Heart left ventricle (tissue), 16 donors: ENCODE measurements at regions of chr11 and their contacts with region 1.

Region 1: GRCh38 chr11:1515082-1516060 is 28.8 kb upstream of the MOB2 start:
- DNase-seq: peak; percentile 75 to 89 (median 80)
- ATAC-seq: peak; percentile 79 to 90 (median 88)
- H3K4me3 ChIP-seq: no peak overlapping the region
- H3K27ac ChIP-seq: peak overlapping the region in 1 of 12 donors; percentile 6
- H3K4me1 ChIP-seq: peaks cover 15 to 79% (median 55%) of the 10 kb centered on the region in 12 donors
- H3K27me3 ChIP-seq: no peaks in the 10 kb centered on the region
- CTCF ChIP-seq: peak; percentile 87 to 99 (median 96)
- POLR2A ChIP-seq: no peak

Region 2: DNA sequence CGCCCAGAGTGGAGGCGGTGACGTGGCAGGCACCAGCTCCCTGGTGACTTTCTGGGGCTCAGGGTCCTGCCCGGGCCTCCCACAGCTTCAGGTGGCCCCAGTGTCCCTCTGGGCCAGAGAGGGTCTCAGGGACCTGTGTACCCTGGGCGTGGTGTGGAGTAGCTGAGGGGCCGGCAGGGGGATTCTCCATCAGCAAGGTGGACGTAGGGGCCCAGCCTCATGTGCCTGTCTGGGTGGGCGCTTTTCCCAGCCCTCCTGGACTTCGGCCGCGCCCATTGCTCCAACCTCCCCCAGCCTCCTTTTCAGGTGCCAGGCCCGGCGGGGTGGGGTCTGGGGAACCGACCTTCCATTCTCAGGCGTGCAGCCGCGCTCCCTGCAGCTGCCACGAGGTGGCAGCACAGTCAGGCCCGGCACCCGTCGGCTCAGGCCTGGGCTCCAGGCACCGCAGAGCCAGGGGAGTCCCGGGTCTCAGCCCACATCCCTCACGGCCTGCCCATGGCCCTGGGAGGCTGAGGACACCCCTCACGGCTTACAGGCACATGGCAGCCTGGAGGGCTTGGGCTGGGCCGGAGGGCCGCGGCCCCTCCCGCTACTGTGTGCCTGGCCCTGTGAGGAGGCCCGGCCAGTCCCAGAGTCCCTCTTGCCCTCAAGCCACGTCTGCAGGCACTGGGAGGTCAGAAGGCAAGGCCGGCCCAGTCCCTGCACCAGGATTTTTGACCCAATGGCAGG is 312.4 kb before region 1 on chr11:
- intact Hi-C with region 1: loop called in 9 of 10 experiments (anchors 1 to 5 kb)
- DNase-seq: peak in 4 of 5 donors; percentile 19 to 81 (median 55)
- ATAC-seq: peak; percentile 28 to 84 (median 72)
- H3K4me3 ChIP-seq: no peak overlapping the region
- H3K27ac ChIP-seq: no peak overlapping the region
- H3K4me1 ChIP-seq: peaks cover 0 to 8% (median 0%) of the 10 kb centered on the region in 12 donors
- H3K27me3 ChIP-seq: peaks cover 0 to 35% (median 14%) of the 10 kb centered on the region in 9 donors
- CTCF ChIP-seq: peak; percentile 75 to 94 (median 91)
- POLR2A ChIP-seq: no peak

Region 3: GRCh38 chr11:1298695-1299492 is 216.5 kb before region 1 on chr11:
- intact Hi-C with region 1: loop called in 3 of 10 experiments (anchors 10 kb)
- DNase-seq: peak; percentile 49 to 86 (median 85)
- ATAC-seq: peak; percentile 57 to 89 (median 80)
- H3K4me3 ChIP-seq: no peak overlapping the region
- H3K27ac ChIP-seq: peak overlapping the region in 6 of 12 donors; percentile 17 to 63 (median 34)
- H3K4me1 ChIP-seq: peaks cover 0 to 50% (median 35%) of the 10 kb centered on the region in 12 donors
- H3K27me3 ChIP-seq: no peaks in the 10 kb centered on the region
- CTCF ChIP-seq: no peak
- POLR2A ChIP-seq: no peak

Region 4: DNA sequence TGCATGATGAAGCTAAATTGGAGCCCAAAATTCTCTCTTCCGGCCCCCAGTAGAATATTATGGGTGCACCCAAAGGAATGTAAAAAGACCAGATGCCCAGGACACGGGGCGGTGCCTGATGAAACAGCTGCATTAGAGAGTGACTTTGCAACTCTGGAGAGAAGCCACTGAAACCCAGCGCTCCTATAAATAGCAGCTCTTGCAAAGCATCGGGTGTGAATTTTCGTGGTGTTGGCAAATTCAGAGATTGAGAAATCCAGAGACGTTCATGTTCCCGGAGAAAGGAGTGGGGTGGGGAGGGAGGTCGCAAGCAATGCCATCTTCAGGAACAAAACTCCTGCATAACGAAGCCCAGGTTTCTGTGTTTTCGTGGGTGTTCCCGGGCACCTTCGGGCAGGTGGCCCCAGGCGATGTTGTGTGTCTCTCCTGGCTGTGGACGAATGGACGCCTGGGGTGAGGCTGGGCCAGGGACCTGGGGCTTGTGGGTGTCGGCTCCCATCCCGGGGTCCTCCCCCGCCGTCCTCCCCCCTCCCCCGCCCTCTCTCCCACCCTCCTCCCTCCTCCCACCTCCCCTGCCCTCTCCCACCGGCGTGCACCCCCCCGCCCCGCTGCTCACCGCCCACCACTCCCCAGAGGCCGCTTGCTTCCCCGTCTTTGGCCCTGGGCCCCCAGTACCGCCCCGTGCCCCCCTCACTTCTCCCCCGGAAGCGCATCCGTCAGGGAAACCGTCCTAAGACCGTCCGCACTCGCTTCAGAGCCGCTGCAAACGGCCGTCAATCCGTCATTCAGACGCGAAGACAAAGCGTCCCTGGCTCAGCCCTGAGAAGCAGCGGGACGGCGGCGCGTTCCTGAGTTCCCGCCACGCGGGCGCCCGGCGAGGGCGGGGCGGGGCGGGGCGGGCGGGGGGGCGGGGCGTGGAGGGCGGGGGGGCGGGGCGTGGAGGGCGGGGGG is 179.3 kb before region 1 on chr11:
- intact Hi-C with region 1: loop called in 1 of 10 experiments (anchors 5 kb)
- DNase-seq: peak; percentile 53 to 80 (median 68)
- ATAC-seq: peak; percentile 65 to 78 (median 75)
- H3K4me3 ChIP-seq: peak overlapping the region; percentile 24 to 59 (median 52)
- H3K27ac ChIP-seq: peak overlapping the region in 10 of 12 donors; percentile 18 to 80 (median 48)
- H3K4me1 ChIP-seq: peaks cover 4 to 25% (median 12%) of the 10 kb centered on the region in 12 donors
- H3K27me3 ChIP-seq: no peaks in the 10 kb centered on the region
- CTCF ChIP-seq: no peak
- POLR2A ChIP-seq: no peak

Region 5: DNA sequence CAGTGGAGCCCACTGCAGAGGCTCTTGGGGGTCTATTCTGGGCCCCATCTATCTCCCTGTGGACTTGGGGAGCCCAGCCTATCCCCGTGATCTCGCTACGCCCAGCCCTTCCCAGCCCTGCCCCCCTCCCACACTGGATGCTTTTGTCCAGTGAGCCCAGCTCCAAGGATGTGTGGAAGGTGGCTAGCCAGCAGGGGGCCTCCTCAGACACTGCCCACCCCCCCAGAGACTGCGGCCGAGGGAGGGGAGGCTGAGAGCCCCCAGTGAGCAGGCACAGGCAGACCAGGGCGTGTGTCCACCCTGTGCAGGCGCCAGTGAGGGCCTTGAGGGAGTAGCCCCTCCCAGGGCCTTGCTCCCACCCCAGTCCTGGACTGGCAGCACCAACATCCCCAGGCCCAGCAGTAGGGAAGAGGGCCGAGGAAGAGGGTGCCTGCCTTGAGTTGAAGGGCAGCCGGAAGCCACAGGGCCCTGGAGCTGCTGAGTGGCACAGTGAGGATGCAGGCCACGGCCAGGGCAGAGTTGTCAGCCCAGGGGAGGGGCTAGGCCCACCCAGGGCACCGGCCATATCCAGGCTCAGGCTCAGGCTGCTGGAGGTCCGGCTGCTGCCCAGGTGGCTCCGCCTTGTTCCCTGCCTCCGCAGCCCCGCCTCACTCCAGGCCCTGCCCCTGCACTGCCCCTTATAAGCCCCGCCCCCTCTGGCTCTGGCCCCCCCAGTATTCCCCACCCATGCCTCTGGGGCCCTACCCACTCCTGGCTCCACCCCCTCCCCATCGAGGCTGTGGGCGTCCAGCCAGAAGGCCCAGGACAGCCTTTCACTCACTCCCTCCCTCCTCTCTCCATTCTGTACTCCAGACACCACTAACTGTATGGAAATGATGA is 56.8 kb before region 1 on chr11:
- intact Hi-C with region 1: loop called in 6 of 10 experiments (anchors 2 to 10 kb)
- DNase-seq: peak in 4 of 5 donors; percentile 45 to 63 (median 53)
- ATAC-seq: peak; percentile 26 to 49 (median 40)
- H3K4me3 ChIP-seq: peak overlapping the region in 1 of 12 donors; percentile 14
- H3K27ac ChIP-seq: peak overlapping the region in 3 of 12 donors; percentile 5 to 93 (median 50)
- H3K4me1 ChIP-seq: peaks cover 0 to 18% (median 3%) of the 10 kb centered on the region in 12 donors
- H3K27me3 ChIP-seq: no peaks in the 10 kb centered on the region
- CTCF ChIP-seq: peak in 8 of 12 donors; percentile 5 to 43 (median 20)
- POLR2A ChIP-seq: no peak

Region 6: GRCh38 chr11:1478544-1478943 is 36.8 kb before region 1 on chr11:
- intact Hi-C with region 1: loop called in 1 of 10 experiments (anchors 5 kb)
- DNase-seq: peak in 2 of 5 donors; percentile 18 to 27
- ATAC-seq: no peak
- H3K4me3 ChIP-seq: no peak overlapping the region
- H3K27ac ChIP-seq: peak overlapping the region in 1 of 12 donors; percentile 92
- H3K4me1 ChIP-seq: peaks cover 8 to 42% (median 23%) of the 10 kb centered on the region in 12 donors
- H3K27me3 ChIP-seq: no peaks in the 10 kb centered on the region
- CTCF ChIP-seq: no peak
- POLR2A ChIP-seq: no peak